Ovary (tissue), 10 donors: ENCODE measurements at regions of chr3 and their contacts with region 1.

Region 1: DNA sequence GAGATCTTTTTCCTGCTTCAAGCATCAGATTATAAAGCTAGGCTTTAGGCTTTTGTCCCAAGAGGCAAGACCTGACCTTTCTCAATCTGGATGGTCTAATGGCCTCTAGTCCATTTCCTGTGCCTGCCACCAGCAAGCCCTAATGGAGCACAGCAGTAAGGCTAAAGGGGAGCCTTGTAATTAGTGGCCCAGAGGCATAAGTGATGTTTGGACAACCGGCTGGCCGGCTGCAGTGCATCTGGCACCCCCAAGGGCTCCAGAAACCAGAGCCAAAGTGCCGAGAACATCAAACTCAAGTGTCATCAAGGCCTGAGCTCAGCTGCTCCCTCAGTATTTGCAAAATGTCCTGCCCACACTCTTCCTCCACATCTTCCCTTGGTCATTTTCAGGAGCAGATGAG is 31.9 kb upstream of the RTP4 start:
- DNase-seq: no peak
- H3K4me3 ChIP-seq: no peak overlapping the region
- H3K27ac ChIP-seq: no peak overlapping the region
- H3K4me1 ChIP-seq: no peaks in the 10 kb centered on the region
- H3K27me3 ChIP-seq: no peaks in the 10 kb centered on the region
- CTCF ChIP-seq: no peak
- EP300 ChIP-seq: no peak
- POLR2A ChIP-seq: no peak

Region 2: DNA sequence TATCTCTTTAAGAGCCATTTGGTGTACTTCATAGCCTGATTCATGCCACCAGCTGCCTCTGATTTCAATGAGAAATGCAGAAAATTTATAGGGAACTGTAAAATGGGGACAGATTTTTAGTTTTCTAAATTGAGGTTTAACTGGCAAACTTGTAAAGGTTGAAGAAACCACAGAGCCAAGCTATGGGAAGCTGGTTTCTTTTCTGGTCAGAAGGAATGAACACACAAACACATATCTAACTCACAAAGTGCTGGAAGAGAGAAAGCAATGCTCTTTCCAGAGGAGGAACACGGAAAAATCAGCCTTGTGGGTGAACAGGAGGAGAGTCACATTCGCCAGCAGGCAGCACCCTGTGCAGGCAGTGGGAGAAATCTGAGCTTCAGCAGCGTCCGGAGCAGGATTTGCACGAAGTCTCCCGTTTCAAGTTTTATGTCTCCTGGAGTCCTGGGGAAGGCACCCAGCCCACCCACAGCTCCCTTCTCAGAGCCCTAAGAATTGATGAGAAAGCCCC is 45.3 kb before region 1 on chr3:
- intact Hi-C with region 1: no loop called
- DNase-seq: peak in 2 of 5 donors; percentile 26 to 40
- H3K4me3 ChIP-seq: peak overlapping the region; percentile 46
- H3K27ac ChIP-seq: no peak overlapping the region
- H3K4me1 ChIP-seq: no peaks in the 10 kb centered on the region
- H3K27me3 ChIP-seq: no peaks in the 10 kb centered on the region
- CTCF ChIP-seq: no peak
- EP300 ChIP-seq: no peak
- POLR2A ChIP-seq: no peak

Region 3: DNA sequence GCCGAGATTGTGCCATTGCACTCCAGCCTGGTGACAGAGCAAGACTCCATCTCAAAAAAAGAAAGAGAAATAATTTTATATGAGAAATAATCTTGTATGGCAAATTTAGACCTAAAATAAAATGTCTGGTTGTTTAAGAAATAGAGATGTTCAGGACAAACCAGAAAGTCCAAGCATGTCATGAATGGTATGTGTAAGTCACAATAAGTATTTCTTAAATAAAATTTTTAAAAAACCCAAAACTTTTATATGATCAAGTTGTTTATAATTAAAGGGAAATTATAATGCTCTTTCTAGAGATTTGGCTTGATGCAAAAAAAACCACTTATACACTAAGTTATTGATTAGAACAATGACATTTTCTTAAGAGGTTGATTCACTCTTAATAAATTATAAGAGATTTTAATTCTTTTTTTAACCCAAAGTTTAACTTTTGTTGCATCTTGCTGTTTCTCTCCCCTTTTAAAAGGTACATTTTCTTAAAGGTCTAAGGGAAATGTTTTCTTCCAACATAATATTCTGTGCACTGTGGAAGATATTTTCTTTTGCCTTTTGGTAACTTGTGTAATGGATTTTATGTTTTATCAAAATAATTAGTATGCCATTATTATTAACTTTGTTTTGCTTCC is 137.6 kb after region 1 on chr3:
- intact Hi-C with region 1: loop called in 1 of 4 experiments (anchors 5 kb)
- DNase-seq: no peak
- H3K4me3 ChIP-seq: no peak overlapping the region
- H3K27ac ChIP-seq: no peak overlapping the region
- H3K4me1 ChIP-seq: no peaks in the 10 kb centered on the region
- H3K27me3 ChIP-seq: no peaks in the 10 kb centered on the region
- CTCF ChIP-seq: no peak
- EP300 ChIP-seq: no peak
- POLR2A ChIP-seq: no peak